Left colon (tissue), 2 donors: ENCODE measurements at regions of chr1 and their contacts with region 1.

Region 1: GRCh38 chr1:205255941-205256780 is 28.4 kb downstream of the TMCC2 start:
- DNase-seq: peak; percentile 82 to 92
- ATAC-seq: peak; percentile 94

Region 2: DNA sequence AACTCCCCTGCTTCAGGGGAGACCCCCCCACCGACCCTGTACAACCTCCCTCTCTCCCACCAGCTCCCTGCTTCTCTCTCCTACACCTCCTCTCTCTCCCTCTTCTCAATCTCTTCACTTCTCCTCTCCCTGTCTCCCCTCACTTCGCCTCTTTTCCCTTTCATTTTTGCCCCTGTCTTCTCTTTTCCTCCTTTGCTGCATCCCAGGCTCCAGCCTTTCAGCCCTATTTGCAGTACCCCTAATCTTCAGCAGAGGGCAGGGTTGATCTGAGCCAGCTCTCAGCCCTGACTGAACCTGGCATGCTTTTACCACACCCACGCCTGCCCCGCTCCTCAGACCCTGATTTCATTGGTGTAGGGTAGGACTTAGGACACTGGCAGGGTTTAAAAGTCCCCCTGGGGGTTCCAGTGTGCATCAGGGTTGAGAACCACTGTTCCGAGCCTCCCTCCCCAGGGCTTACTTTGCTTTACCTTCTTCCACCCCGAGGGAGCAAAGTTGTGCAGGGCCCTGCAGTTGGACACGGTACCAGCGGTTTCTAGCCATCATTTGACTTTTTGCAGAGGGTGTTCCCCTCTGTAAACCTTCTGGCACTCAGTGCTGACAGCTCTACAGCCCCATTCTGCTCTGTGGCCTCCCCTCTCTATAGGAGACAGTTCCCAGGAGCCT is 280.5 kb before region 1 on chr1:
- intact Hi-C with region 1: loop called (anchors 10 kb)
- DNase-seq: peak in 1 of 2 donors; percentile 56
- ATAC-seq: peak; percentile 84

Region 3: GRCh38 chr1:205091043-205091740 is 165.0 kb before region 1 on chr1:
- intact Hi-C with region 1: no loop called
- DNase-seq: no peak
- ATAC-seq: peak; percentile 85

Region 4: DNA sequence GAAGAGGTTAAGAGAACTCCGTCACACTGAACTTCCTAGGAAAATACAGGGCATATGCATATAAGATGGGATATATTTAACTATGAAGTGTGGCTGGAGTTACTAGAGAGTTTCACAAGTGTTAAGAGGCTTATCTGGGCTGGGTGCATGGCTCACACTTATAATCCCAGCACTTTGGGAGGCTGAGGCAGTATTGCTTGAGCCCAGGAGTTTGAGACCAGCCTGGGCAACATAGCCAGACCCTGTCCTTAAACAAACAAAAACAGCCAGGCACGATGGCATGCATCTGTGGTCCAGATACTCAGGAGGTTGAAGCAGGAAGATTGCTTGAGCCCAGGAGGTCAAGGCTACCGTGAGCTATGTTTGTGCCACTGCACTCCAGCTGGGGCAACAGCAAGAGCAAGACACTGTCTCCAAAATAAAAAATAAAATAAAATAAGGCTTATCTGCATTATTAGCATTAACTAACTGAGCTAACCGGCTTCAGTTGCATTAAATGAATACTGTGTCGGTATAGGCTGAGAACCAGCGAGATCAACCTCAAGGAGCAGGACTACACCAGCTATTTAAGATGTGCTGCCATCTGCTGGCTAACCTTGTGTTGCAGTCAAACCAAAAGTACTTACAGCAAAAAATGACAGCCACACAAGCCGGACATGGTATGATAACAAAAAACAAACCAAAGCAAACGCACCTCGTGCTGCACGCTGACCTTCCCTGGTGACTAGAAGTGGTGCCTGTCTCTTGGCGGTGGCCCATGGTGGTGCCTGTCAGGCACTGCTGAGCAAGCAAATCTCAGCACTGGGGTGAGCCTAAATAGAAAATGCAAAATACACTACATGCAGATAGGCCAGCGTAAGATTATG is 114.7 kb before region 1 on chr1:
- intact Hi-C with region 1: loop called (anchors 10 kb)
- DNase-seq: peak; percentile 47 to 87
- ATAC-seq: peak; percentile 93